Naive thymus-derived CD4-positive, alpha-beta T cell (primary cell): ENCODE measurements at regions of chr2 and their contacts with region 1.

Region 1: DNA sequence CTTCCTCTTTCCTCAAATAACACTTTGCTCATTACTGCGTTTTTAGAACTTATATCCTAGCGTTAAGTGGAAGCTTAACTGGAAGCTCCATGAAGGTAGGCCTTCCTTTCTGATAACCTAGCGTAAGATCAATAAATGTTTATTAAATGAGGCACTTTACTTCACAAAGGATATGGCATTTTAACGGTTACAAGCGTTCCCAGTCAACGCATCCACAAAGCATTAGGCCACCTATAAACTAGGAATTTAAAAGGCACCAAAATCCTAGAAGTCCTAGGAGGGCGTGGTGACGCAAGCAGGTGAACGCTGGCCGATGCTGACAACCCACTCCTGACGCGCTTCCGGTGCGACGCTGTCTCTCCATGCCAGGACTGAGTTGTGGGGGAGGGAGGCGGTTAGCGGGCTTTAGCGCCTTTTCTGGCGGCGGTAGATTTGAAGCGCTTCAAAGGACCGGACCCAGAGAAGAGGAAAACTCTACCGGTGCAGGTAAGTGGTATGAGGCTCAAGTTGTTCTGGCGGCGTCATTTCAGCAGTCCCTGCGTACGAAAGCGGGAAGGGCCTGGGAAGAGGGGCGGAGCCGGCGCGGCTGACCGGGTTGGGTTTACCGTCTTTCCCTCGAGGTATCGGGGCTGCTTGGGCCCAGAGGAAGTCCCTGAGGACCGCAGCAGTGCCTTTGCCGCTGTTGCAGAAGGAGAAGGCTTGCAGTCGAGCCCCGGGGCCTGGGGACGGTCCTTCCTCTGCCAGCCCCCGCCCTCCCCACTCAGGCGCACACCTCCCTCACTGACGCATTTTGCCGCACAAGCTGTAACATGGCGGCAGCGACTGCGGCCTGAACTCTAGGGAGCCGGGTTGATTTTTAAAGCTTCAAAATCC is at the start of gene PPIG:
- DNase-seq: peak; percentile 71 to 90 (median 85)
- ATAC-seq: peak; percentile 94
- H3K4me3 ChIP-seq: peak within 1 kb of the TSS; percentile 89
- H3K4me3 Mint-ChIP-seq: peak within 1 kb of the TSS; percentile 90 to 100 (median 99)
- H3K27ac ChIP-seq: peak within 1 kb of the TSS; percentile 99
- H3K27ac Mint-ChIP-seq: peak within 1 kb of the TSS; percentile 97 to 100 (median 100)
- H3K4me1 ChIP-seq: peaks cover 17 to 29% of the 10 kb centered on the region in 2 donors
- H3K4me1 Mint-ChIP-seq: peaks cover 12 to 46% (median 40%) of the 10 kb centered on the region in 7 donors
- H3K27me3 ChIP-seq: no peaks in the 10 kb centered on the region
- H3K27me3 Mint-ChIP-seq: peaks cover 0 to 4% (median 0%) of the 10 kb centered on the region in 5 donors
- total RNA-seq, gene PPIG: 50.6 to 86.1 (median 73.7) TPM

Region 2: GRCh38 chr2:169072163-169072925 is 511.9 kb before region 1 on chr2:
- CTCF ChIA-PET with region 1: no interaction called
- POLR2A ChIA-PET with region 1: no interaction called
- intact Hi-C with region 1: no loop called
- DNase-seq: no peak
- ATAC-seq: peak; percentile 66
- H3K4me3 ChIP-seq: no peak overlapping the region
- H3K4me3 Mint-ChIP-seq: peak overlapping the region in 1 of 10 donors; percentile 37
- H3K27ac ChIP-seq: no peak overlapping the region
- H3K27ac Mint-ChIP-seq: peak overlapping the region in 1 of 9 donors; percentile 6
- H3K4me1 ChIP-seq: no peaks in the 10 kb centered on the region
- H3K4me1 Mint-ChIP-seq: peaks cover 0 to 36% (median 8%) of the 10 kb centered on the region in 7 donors
- H3K27me3 ChIP-seq: no peaks in the 10 kb centered on the region
- H3K27me3 Mint-ChIP-seq: peaks cover 0 to 7% (median 0%) of the 10 kb centered on the region in 5 donors

Region 3: DNA sequence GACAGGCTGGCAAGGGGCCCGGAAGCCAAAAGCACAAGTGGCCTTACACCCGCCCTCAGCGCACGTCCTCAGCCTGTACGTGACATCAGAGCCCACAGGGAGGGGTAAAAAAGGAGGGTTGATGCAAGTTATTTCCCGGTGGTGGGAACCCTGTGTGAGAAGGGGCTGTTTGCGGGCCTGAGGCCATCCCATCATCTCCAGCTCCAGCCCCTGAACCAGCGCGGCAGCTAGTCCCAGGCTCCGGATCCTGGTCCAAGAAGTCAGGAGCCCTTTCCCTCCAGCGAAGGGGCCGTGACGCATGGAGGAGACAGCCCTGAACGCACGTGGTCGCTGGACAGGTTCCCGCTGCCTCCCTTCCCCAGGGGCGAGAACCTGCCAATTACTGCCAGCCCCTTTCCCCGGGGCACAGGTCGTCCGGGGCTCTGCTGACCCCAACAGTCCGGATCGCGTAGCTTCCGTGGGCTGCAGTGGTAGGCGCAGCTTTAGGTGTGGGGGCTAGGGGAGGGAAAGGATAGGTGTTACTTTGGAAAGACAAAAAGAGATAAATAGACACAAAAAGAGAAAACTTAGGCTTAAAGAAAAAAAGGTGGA is 220.6 kb before region 1 on chr2:
- CTCF ChIA-PET with region 1: no interaction called
- POLR2A ChIA-PET with region 1: no interaction called
- intact Hi-C with region 1: loop called in 1 of 2 experiments (anchors 2 kb)
- DNase-seq: peak in 8 of 9 donors; percentile 14 to 49 (median 38)
- ATAC-seq: peak; percentile 58
- H3K4me3 ChIP-seq: peak overlapping the region; percentile 89
- H3K4me3 Mint-ChIP-seq: peak overlapping the region; percentile 87 to 98 (median 94)
- H3K27ac ChIP-seq: no peak overlapping the region
- H3K27ac Mint-ChIP-seq: peak overlapping the region in 4 of 9 donors; percentile 14 to 88 (median 55)
- H3K4me1 ChIP-seq: peaks cover 11 to 18% of the 10 kb centered on the region in 2 donors
- H3K4me1 Mint-ChIP-seq: peaks cover 17 to 37% (median 29%) of the 10 kb centered on the region in 7 donors
- H3K27me3 ChIP-seq: peaks cover 4 to 15% of the 10 kb centered on the region in 2 donors
- H3K27me3 Mint-ChIP-seq: peaks cover 42 to 60% (median 49%) of the 10 kb centered on the region in 5 donors

Region 4: DNA sequence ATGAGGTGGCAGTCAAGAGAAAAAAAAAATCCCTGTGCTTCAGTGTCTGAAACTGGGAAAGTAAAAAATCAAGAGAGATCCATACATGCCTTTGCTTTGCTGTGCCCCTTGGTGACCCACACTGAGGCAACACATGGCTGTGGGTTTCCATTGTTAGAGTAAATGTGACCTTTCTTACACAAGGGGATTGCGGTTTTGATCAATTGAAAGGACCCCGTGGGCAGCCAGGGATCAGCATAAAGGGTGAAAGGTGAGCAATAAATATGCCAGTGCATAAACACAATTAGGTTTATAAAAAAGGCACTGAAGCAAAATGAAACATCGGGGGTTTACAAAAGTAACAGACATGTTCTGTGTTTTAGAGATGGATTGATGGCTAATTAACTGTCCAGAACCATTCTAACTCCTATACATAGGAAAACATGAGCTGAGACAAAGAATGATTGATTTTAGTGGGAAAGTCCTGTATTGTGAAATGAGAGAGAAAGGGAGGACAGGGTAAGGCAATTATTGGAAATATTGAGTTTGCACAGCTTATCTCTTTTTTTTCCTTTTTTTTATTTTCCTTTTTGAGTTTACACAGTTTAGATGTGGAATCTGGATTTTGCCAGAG is 145.7 kb before region 1 on chr2:
- CTCF ChIA-PET with region 1: no interaction called
- POLR2A ChIA-PET with region 1: no interaction called
- intact Hi-C with region 1: no loop called
- DNase-seq: no peak
- ATAC-seq: no peak
- H3K4me3 ChIP-seq: no peak overlapping the region
- H3K4me3 Mint-ChIP-seq: no peak overlapping the region
- H3K27ac ChIP-seq: no peak overlapping the region
- H3K27ac Mint-ChIP-seq: no peak overlapping the region
- H3K4me1 ChIP-seq: no peaks in the 10 kb centered on the region
- H3K4me1 Mint-ChIP-seq: peaks cover 0 to 4% (median 0%) of the 10 kb centered on the region in 7 donors
- H3K27me3 ChIP-seq: no peaks in the 10 kb centered on the region
- H3K27me3 Mint-ChIP-seq: peaks cover 39 to 55% (median 42%) of the 10 kb centered on the region in 5 donors

Region 5: GRCh38 chr2:169573160-169573973 is 10.9 kb before region 1 on chr2 and contains the start of gene FASTKD1:
- CTCF ChIA-PET with region 1: interaction called, 5 read pairs
- POLR2A ChIA-PET with region 1: interaction called, 28 read pairs
- intact Hi-C with region 1: loop called (anchors 1 kb)
- DNase-seq: peak; percentile 55 to 88 (median 76)
- ATAC-seq: peak; percentile 100
- H3K4me3 ChIP-seq: peak within 1 kb of the TSS; percentile 93
- H3K4me3 Mint-ChIP-seq: peak within 1 kb of the TSS; percentile 88 to 99 (median 94)
- H3K27ac ChIP-seq: peak within 1 kb of the TSS; percentile 80
- H3K27ac Mint-ChIP-seq: peak within 1 kb of the TSS; percentile 74 to 95 (median 91)
- H3K4me1 ChIP-seq: peaks cover 4 to 5% of the 10 kb centered on the region in 2 donors
- H3K4me1 Mint-ChIP-seq: peaks cover 14 to 32% (median 24%) of the 10 kb centered on the region in 7 donors
- H3K27me3 ChIP-seq: no peaks in the 10 kb centered on the region
- H3K27me3 Mint-ChIP-seq: peaks cover 0 to 4% (median 0%) of the 10 kb centered on the region in 5 donors
- total RNA-seq, gene FASTKD1: 13.5 to 43.5 (median 31.0) TPM

Region 6: DNA sequence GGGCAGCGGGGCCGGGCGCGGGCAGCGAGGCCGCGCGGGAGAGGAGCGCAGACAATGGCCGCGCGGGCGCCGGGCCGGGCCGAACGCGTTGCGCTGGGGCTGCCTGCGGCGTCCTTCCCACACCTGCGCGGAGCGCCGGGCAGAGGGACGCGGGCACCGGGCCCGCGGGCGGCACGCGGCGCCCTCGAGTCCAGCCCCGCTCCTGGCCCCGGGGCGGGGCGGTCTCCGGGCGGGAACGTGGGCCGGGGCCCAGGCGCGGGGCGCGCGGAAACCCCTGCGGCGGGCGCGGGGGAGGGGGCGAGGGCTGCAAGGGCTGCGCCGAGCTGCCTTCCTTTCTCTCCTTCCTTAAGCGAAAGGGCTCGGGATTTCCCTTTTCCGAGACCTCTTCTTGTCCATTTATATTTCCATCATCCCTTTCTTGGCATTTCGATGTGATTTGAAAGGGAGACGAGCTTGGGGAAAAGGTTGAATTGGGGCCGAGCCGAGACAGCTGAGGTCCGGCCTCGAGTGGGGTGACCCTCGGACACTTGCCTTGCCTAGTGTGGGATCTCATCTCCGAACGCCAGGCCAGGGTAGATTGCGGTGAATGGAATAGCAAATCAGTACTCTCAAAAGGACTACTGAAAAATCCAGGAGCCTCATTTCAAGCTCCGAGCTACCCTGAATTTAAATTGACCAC is 150.1 kb after region 1 on chr2:
- CTCF ChIA-PET with region 1: no interaction called
- POLR2A ChIA-PET with region 1: no interaction called
- intact Hi-C with region 1: no loop called
- DNase-seq: peak in 5 of 9 donors; percentile 0 to 57 (median 8)
- ATAC-seq: peak; percentile 45
- H3K4me3 ChIP-seq: peak overlapping the region; percentile 43
- H3K4me3 Mint-ChIP-seq: peak overlapping the region; percentile 65 to 96 (median 73)
- H3K27ac ChIP-seq: no peak overlapping the region
- H3K27ac Mint-ChIP-seq: no peak overlapping the region
- H3K4me1 ChIP-seq: peaks cover 7 to 8% of the 10 kb centered on the region in 2 donors
- H3K4me1 Mint-ChIP-seq: peaks cover 12 to 27% (median 18%) of the 10 kb centered on the region in 7 donors
- H3K27me3 ChIP-seq: peaks cover 0 to 22% of the 10 kb centered on the region in 2 donors
- H3K27me3 Mint-ChIP-seq: peaks cover 30 to 49% (median 45%) of the 10 kb centered on the region in 5 donors

Region 7: DNA sequence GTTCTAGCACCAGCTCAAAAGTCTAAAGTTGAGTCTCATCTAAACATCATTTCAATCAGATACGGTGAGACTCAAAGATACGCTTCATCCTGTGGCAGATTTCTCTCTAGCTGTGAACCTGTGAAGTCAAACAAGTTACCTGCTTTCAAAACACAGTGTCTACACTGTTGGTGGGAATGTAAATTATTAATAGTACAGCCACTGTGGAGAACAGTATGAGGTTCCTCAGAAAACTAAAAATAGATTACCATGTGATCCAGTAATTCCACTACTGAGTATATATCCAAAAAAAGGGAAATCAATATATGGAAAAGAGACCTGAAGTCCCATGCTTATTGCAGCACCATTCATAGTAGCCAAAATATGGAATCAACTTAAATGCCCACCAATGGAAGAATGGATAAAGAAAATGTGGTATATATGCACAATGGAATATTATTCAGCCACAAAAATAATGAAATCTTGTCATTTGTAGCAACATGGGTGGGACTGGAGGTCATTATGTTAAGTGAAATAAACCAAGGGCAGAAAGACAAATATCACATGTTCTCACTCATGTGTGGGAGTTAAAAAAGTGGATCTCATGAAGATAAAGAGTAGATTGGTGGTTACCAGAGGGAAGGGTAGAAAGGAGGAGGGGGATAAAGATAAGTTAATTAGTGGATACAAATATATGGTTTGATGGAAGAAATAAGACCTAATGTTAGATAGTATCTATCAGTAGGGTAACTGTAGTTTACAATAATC is 254.7 kb after region 1 on chr2:
- CTCF ChIA-PET with region 1: no interaction called
- POLR2A ChIA-PET with region 1: no interaction called
- intact Hi-C with region 1: no loop called
- DNase-seq: no peak
- ATAC-seq: no peak
- H3K4me3 ChIP-seq: no peak overlapping the region
- H3K4me3 Mint-ChIP-seq: no peak overlapping the region
- H3K27ac ChIP-seq: no peak overlapping the region
- H3K27ac Mint-ChIP-seq: peak overlapping the region in 2 of 9 donors; percentile 11 to 29
- H3K4me1 ChIP-seq: no peaks in the 10 kb centered on the region
- H3K4me1 Mint-ChIP-seq: peaks cover 11 to 84% (median 70%) of the 10 kb centered on the region in 7 donors
- H3K27me3 ChIP-seq: no peaks in the 10 kb centered on the region
- H3K27me3 Mint-ChIP-seq: no peaks in the 10 kb centered on the region